ENCODE measurements at regions of chr1 and their contacts with region 1.

Region 1: GRCh38 chr1:93607814-93608186 is 73.8 kb downstream of the BCAR3 start:
- DNase-seq: no peak
- ATAC-seq: no peak
- H3K4me3 ChIP-seq: no peak overlapping the region
- H3K4me1 ChIP-seq: peaks cover 4% of the 10 kb centered on the region
- CTCF ChIP-seq: no peak

Region 2: DNA sequence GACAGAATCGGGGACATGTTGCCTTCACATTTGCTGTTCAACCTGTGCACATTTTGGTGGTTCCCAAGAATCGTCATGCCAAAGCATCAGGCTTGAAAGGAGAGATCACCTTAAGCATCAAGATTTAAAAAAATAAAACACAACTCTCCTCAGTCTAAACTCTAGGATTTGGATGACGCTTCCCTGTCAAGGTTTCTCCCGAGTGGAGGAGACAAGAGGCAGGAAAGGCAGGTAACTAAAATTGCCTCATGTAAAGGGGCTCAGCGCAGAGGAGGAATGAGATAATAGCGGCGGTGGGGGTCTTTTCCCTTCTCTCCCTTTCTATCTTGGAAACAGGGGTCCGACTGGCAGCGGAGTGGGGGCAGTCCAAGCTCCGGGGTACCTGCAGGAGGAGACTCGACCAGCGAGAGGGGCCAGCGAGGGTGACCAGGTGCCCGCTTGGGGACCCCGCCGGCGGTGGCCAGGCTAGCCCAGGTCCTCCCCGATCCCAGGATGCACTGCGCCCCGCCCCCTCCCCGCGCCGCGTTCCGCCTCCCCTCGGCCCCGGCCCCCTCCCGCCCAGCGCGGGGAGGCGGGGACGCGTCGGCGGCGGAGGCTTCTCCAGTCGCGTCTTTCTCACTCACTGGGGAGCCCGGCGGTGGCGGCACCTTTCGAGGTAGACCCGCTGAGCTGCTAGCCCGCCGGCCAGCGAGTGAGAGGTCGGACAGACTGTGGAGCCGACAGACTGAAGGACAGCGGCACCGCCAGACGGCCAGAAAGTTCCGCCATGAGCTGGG is 160.1 kb before region 1 on chr1 and contains the start of gene FNBP1L:
- intact Hi-C with region 1: loop called in 1 of 2 experiments (anchors 10 kb)
- DNase-seq: peak; percentile 83 to 87 (median 86)
- ATAC-seq: peak; percentile 83
- H3K4me3 ChIP-seq: peak within 1 kb of the TSS; percentile 87
- H3K4me1 ChIP-seq: no peaks in the 10 kb centered on the region
- CTCF ChIP-seq: no peak
- total RNA-seq, gene FNBP1L: 32.7 to 49.1 (median 44.4) TPM